ENCODE measurements at regions of chr14 and their contacts with region 1.

Region 1: DNA sequence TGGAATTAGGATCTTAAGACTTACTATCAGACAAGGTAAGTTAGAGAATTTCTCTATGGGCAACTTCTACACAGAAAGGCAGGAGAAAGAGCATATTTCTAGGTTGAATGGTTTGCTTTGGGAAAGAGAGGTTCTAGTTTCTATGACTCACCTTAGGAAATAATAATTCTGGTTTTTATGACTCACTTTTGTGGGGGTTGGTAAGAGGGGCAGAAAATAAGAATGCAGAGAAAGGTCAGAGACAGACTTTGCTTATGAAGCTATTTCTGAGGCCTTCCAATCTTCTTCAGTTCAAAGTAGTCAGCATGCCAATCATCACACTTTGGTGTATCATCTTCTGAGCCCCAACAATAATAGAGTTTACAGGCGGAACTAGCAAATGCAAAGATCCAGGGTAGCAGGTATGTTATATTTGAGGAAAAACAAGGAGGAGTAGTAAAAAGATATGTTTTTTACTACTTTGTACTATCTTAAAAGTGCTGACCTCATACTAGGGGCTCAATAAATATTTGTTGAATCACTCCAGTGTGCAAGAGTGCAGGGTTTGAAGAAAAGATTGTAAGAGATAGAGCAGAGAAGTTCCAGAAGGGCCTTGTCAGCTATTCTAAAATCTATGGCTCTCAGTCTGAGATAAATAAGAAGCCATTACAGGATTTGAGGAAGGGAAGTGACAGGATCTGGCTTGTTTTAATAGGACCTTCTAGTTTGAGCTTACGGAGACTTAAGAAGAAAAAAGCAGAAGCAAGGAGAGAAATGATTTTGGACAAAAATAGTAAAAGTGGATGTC is 56.7 kb upstream of the LRFN5 start:
- H3K4me3 Mint-ChIP-seq: no peak overlapping the region
- H3K27ac Mint-ChIP-seq: no peak overlapping the region
- H3K4me1 Mint-ChIP-seq: no peaks in the 10 kb centered on the region
- H3K27me3 Mint-ChIP-seq: no peaks in the 10 kb centered on the region

Region 2: GRCh38 chr14:41343857-41344256 is 206.2 kb before region 1 on chr14:
- intact Hi-C with region 1: no loop called
- H3K4me3 Mint-ChIP-seq: no peak overlapping the region
- H3K27ac Mint-ChIP-seq: no peak overlapping the region
- H3K4me1 Mint-ChIP-seq: no peaks in the 10 kb centered on the region
- H3K27me3 Mint-ChIP-seq: no peaks in the 10 kb centered on the region

Region 3: DNA sequence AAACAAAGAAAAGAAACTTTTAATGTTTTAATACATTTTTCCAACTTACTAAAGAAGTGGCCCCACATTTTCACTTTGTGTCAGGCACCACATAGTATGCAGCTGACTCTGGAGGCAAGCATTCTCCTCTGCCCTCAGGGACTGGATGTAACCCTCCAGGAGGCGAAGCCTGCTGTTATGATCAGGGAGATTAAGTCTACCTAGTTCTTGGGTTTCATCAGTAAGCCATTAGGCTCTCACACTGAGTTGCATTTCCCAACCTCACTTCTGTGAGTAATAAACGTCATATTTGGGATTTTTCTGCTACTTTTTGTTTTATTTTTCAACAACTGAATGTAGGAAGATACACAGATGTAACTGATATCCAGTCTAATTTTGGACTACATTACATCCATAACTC is 44.5 kb before region 1 on chr14:
- intact Hi-C with region 1: loop called (anchors 1 kb)
- H3K4me3 Mint-ChIP-seq: no peak overlapping the region
- H3K27ac Mint-ChIP-seq: no peak overlapping the region
- H3K4me1 Mint-ChIP-seq: no peaks in the 10 kb centered on the region
- H3K27me3 Mint-ChIP-seq: no peaks in the 10 kb centered on the region

Region 4: DNA sequence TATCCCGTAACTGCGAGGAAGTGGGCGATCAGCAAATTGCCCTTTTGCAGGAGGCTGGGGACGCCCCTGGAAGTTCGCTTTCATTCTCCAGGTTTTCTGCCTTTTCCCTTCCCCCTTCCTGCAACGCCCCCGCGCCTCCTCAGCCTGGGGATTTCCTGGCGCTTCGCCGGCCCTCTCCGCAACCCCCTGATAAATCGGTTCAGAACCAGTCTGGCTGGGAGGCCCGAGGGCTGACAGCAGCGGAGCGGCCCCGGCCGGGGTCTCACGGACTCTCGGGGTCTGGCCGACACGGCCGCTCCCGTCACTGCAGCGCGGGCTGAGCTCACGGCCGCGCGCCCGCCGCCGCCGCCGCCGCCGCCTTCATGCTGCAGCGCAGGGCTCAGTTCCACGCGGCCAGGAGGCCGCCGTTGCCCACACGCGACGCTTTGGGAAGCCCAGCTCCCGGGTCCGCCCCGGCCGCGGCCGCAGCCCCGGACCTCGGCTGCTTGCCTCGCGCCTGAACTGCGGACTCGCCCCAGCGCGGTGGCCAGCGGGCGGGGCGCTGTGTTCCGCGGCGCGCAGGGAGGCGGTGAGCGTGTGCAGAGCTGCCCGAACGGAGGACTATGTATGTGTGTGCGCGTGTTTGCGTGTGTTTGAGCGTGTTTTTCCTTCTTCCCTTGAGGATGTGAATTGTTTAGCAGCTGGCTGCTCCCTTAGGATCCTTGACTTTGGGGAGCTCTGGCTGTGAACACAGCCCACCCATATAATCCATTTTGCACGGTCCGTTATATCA is 56.7 kb after region 1 on chr14 and contains the start of gene LRFN5:
- intact Hi-C with region 1: no loop called
- H3K4me3 Mint-ChIP-seq: peak within 1 kb of the TSS; percentile 42
- H3K27ac Mint-ChIP-seq: no peak within 1 kb of the TSS
- H3K4me1 Mint-ChIP-seq: peaks cover 5% of the 10 kb centered on the region
- H3K27me3 Mint-ChIP-seq: peaks cover 74% of the 10 kb centered on the region